MCF 10A (cell line): ENCODE measurements at regions of chr12 and their contacts with region 1.

Region 1: DNA sequence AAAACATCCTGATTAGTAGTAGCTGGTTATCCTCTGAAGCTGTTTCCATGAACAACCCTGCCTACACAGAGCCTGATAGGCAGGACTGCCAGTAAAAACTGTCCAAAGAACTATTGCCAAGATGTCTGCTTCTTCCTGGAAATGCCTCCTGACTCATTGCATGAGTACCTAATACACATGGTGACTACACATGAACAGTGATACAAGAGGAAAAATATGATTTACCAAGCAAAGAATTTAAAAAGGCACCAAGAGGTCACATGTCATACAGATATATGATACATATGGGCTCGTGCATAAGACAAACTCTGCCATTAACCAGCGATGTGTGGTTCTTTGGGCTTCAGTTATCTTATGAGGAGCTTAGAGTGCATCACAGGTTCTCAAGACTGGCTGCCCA is 552.3 kb downstream of the SLC16A7 start:
- DNase-seq: peak; percentile 77
- H3K4me3 Mint-ChIP-seq: no peak overlapping the region
- H3K27ac Mint-ChIP-seq: peak overlapping the region; percentile 79
- H3K4me1 Mint-ChIP-seq: peaks cover 27% of the 10 kb centered on the region
- H3K27me3 Mint-ChIP-seq: no peaks in the 10 kb centered on the region
- CTCF ChIP-seq: no peak

Region 2: GRCh38 chr12:60194678-60195077 is 46.6 kb after region 1 on chr12:
- CTCF ChIA-PET with region 1: interaction called, 3 read pairs
- POLR2A ChIA-PET with region 1: interaction called, 4 read pairs
- intact Hi-C with region 1: loop called (anchors 2 kb)
- DNase-seq: no peak
- H3K4me3 Mint-ChIP-seq: no peak overlapping the region
- H3K27ac Mint-ChIP-seq: no peak overlapping the region
- H3K4me1 Mint-ChIP-seq: peaks cover 7% of the 10 kb centered on the region
- H3K27me3 Mint-ChIP-seq: no peaks in the 10 kb centered on the region
- CTCF ChIP-seq: no peak

Region 3: DNA sequence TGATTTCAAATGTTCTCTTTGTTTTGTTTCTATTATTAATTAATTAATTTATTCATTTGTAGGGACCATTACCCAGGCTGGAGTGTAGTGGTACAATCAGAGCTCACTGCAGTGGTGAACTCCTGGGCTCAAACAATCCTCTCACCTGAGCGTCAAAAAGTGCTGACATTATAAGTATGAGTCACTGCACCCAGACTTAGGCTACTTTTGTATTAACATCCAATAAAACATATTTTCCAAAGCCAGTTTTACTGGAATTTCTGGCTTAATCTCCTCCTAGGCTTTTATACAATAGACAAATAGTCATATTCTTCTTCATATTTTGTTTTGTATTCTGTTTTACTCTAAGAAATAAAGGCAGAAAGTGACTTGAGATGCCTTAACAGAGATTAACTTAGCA is 197.3 kb after region 1 on chr12:
- CTCF ChIA-PET with region 1: no interaction called
- POLR2A ChIA-PET with region 1: no interaction called
- intact Hi-C with region 1: no loop called
- DNase-seq: peak; percentile 5
- H3K4me3 Mint-ChIP-seq: no peak overlapping the region
- H3K27ac Mint-ChIP-seq: no peak overlapping the region
- H3K4me1 Mint-ChIP-seq: no peaks in the 10 kb centered on the region
- H3K27me3 Mint-ChIP-seq: no peaks in the 10 kb centered on the region
- CTCF ChIP-seq: no peak

Region 4: GRCh38 chr12:60487284-60487683 is 339.2 kb after region 1 on chr12:
- CTCF ChIA-PET with region 1: no interaction called
- POLR2A ChIA-PET with region 1: no interaction called
- intact Hi-C with region 1: no loop called
- DNase-seq: no peak
- H3K4me3 Mint-ChIP-seq: no peak overlapping the region
- H3K27ac Mint-ChIP-seq: no peak overlapping the region
- H3K4me1 Mint-ChIP-seq: no peaks in the 10 kb centered on the region
- H3K27me3 Mint-ChIP-seq: no peaks in the 10 kb centered on the region
- CTCF ChIP-seq: no peak